ENCODE measurements at regions of chr6 and their contacts with region 1.

Region 1: DNA sequence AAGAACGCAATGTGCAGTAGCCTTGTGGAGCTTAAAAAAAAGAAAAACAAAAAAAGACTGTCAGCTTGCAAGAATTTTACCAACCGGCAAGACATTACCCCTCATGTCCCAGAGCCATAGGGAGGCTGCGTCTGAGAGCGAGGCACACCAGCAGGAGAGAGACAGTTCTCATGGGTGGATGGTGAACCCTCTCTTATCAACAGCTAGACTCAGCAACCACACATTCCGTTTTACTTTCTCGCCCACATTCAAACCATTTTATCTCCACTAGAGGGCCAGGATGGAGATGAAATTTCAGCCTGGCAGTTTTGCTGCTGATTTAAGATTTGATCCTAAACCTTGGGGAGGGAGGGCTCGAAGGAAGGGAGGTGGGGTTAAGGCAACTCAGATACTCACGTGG is 247.0 kb downstream of the ATXN1 start:
- DNase-seq: no peak
- ATAC-seq: peak; percentile 50
- H3K4me3 ChIP-seq: no peak overlapping the region
- H3K27ac ChIP-seq: no peak overlapping the region
- H3K4me1 ChIP-seq: peaks cover 45% of the 10 kb centered on the region
- H3K27me3 ChIP-seq: no peaks in the 10 kb centered on the region
- CTCF ChIP-seq: peak; percentile 49 to 62 (median 60)
- EP300 ChIP-seq: no peak
- POLR2A ChIP-seq: no peak
- RAD21 ChIP-seq: peak; percentile 78

Region 2: GRCh38 chr6:16286148-16286522 is 228.1 kb before region 1 on chr6:
- CTCF ChIA-PET with region 1: interaction called, 11 read pairs
- POLR2A ChIA-PET with region 1: no interaction called
- RAD21 ChIA-PET with region 1: no interaction called
- SMC1A ChIA-PET with region 1: no interaction called
- in situ Hi-C with region 1: no loop called
- intact Hi-C with region 1: no loop called
- DNase-seq: no peak
- ATAC-seq: peak; percentile 82
- H3K4me3 ChIP-seq: no peak overlapping the region
- H3K27ac ChIP-seq: no peak overlapping the region
- H3K4me1 ChIP-seq: no peaks in the 10 kb centered on the region
- H3K27me3 ChIP-seq: no peaks in the 10 kb centered on the region
- CTCF ChIP-seq: peak; percentile 79 to 95 (median 84)
- EP300 ChIP-seq: no peak
- POLR2A ChIP-seq: no peak
- RAD21 ChIP-seq: peak; percentile 90

Region 3: DNA sequence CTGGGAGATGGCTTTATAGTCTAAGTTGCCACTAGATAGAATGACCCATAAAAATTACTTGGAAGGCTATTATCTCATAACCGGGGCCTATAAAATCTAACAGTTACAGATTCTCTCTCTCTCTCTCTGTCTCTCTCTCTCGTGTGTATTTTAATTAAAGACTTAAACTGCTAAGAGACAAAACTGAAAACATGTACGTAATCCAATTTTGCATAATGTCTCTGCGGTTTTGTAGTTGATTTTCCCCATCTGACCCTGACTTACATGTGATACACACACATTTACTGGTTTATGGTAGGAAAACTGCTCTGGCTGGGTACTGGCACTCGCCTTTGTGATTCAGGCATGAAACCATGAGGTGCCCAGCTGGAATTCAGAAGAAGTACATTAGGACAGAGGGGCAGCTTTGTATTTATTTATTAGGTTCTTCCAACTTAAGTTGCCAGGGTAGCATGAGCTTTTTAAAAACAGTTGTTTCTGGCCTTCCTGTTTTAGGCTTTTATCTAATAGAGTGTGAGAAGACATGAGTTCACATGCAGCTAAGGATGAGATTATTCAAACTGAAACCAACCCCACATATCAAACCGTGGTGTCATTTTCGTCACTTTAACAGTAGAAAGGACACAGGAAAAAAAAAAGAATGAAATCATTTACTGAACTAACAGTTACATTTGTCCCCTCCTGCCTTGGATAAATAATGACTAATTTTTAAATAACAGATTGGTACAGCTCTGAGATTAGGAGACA is 93.4 kb before region 1 on chr6:
- CTCF ChIA-PET with region 1: interaction called, 51 read pairs
- POLR2A ChIA-PET with region 1: interaction called, 3 read pairs
- RAD21 ChIA-PET with region 1: interaction called, 47 read pairs
- SMC1A ChIA-PET with region 1: interaction called, 33 read pairs
- in situ Hi-C with region 1: no loop called
- intact Hi-C with region 1: no loop called
- DNase-seq: peak; percentile 97
- ATAC-seq: peak; percentile 68
- H3K4me3 ChIP-seq: no peak overlapping the region
- H3K27ac ChIP-seq: peak overlapping the region; percentile 98
- H3K4me1 ChIP-seq: peaks cover 36% of the 10 kb centered on the region
- H3K27me3 ChIP-seq: no peaks in the 10 kb centered on the region
- CTCF ChIP-seq: no peak
- EP300 ChIP-seq: peak; percentile 91; a peak in 3 of 4 replicates
- POLR2A ChIP-seq: peak; percentile 48; the same call in 1 of the 2 replicates
- RAD21 ChIP-seq: 0 out of 2 replicates have a peak, but pooled peaks have one; percentile 18

Region 4: DNA sequence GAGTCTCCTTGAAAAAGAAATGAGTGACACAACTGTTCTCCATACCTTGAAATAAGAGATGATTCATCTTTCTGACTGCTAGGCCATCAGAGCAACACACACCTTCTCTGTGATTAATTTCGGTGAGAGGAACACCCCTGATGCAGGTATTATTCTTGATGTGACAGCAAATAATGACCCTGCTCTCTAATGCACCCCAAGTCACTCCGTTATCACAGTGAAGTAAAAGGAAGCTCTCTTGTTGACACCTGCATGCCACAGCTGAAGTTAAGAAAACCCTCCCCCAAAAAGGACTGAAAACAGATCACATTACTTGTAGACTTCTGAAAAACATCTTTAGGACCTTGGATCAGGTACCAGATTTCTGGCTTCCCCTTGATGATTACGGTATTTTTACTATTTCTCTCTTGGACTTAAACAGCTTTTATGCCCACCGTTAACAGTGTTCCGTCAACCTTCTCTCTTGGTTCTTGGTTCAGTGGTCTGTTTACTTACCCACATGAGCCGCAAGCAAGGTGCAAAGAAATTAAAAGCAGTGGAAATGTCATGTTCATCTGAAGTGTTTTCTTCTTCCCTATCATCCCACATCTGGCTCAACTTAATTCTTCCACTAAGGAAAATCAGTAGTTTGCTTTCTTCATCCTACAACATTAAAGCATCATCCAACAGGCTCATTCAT is 26.1 kb before region 1 on chr6:
- CTCF ChIA-PET with region 1: interaction called, 203 read pairs
- POLR2A ChIA-PET with region 1: interaction called, 7 read pairs
- RAD21 ChIA-PET with region 1: interaction called, 58 read pairs
- SMC1A ChIA-PET with region 1: interaction called, 135 read pairs
- in situ Hi-C with region 1: no loop called
- intact Hi-C with region 1: no loop called
- DNase-seq: no peak
- ATAC-seq: peak; percentile 7
- H3K4me3 ChIP-seq: peak overlapping the region; percentile 49; the same call in 1 of the 2 replicates
- H3K27ac ChIP-seq: peak overlapping the region; percentile 40; the same call in 1 of the 2 replicates
- H3K4me1 ChIP-seq: peaks cover 69% of the 10 kb centered on the region
- H3K27me3 ChIP-seq: no peaks in the 10 kb centered on the region
- CTCF ChIP-seq: no peak
- EP300 ChIP-seq: peak in 1 of 2 experiments; percentile 41; a peak in 1 of 4 replicates
- POLR2A ChIP-seq: no peak
- RAD21 ChIP-seq: no peak

Region 5: GRCh38 chr6:16583144-16583762 is 69.0 kb after region 1 on chr6:
- CTCF ChIA-PET with region 1: interaction called, 5 read pairs
- POLR2A ChIA-PET with region 1: no interaction called
- RAD21 ChIA-PET with region 1: interaction called, 4 read pairs
- SMC1A ChIA-PET with region 1: interaction called, 98 read pairs
- in situ Hi-C with region 1: no loop called
- intact Hi-C with region 1: no loop called
- DNase-seq: no peak
- ATAC-seq: no peak
- H3K4me3 ChIP-seq: no peak overlapping the region
- H3K27ac ChIP-seq: no peak overlapping the region
- H3K4me1 ChIP-seq: peaks cover 8% of the 10 kb centered on the region
- H3K27me3 ChIP-seq: no peaks in the 10 kb centered on the region
- CTCF ChIP-seq: no peak
- EP300 ChIP-seq: no peak
- POLR2A ChIP-seq: no peak
- RAD21 ChIP-seq: no peak

Region 6: GRCh38 chr6:16690608-16691198 is 176.5 kb after region 1 on chr6:
- CTCF ChIA-PET with region 1: interaction called, 6 read pairs
- POLR2A ChIA-PET with region 1: interaction called, 4 read pairs
- RAD21 ChIA-PET with region 1: interaction called, 4 read pairs
- SMC1A ChIA-PET with region 1: interaction called, 10 read pairs
- in situ Hi-C with region 1: no loop called
- intact Hi-C with region 1: no loop called
- DNase-seq: no peak
- ATAC-seq: peak; percentile 92
- H3K4me3 ChIP-seq: peak overlapping the region; percentile 13; the same call in 1 of the 2 replicates
- H3K27ac ChIP-seq: peak overlapping the region; percentile 13; the same call in 1 of the 2 replicates
- H3K4me1 ChIP-seq: peaks cover 44% of the 10 kb centered on the region
- H3K27me3 ChIP-seq: no peaks in the 10 kb centered on the region
- CTCF ChIP-seq: no peak
- EP300 ChIP-seq: peak; percentile 73 to 82
- POLR2A ChIP-seq: peak; percentile 32; the same call in 1 of the 2 replicates
- RAD21 ChIP-seq: no peak

Region 7: GRCh38 chr6:16770701-16771569 is 256.7 kb after region 1 on chr6:
- CTCF ChIA-PET with region 1: interaction called, 174 read pairs
- POLR2A ChIA-PET with region 1: no interaction called
- RAD21 ChIA-PET with region 1: interaction called, 4 read pairs
- SMC1A ChIA-PET with region 1: interaction called, 7 read pairs
- in situ Hi-C with region 1: no loop called
- intact Hi-C with region 1: no loop called
- DNase-seq: no peak
- ATAC-seq: peak; percentile 87
- H3K4me3 ChIP-seq: no peak overlapping the region
- H3K27ac ChIP-seq: no peak overlapping the region
- H3K4me1 ChIP-seq: no peaks in the 10 kb centered on the region; the same call in 1 of the 2 replicates
- H3K27me3 ChIP-seq: no peaks in the 10 kb centered on the region
- CTCF ChIP-seq: peak; percentile 89 to 98 (median 94)
- EP300 ChIP-seq: 0 out of 4 replicates have a peak, but pooled peaks of 1 of the 2 experiments have one; percentile 18
- POLR2A ChIP-seq: no peak
- RAD21 ChIP-seq: peak; percentile 72